K562 (cell line): ENCODE measurements at regions of chr22 and their contacts with region 1.

Region 1: GRCh38 chr22:30386960-30387827 is at the start of gene RNF215:
- DNase-seq: peak; percentile 82 to 93 (median 91)
- ATAC-seq: peak; percentile 88
- H3K4me3 ChIP-seq: peak within 1 kb of the TSS; percentile 48
- H3K27ac ChIP-seq: no peak within 1 kb of the TSS
- H3K4me1 ChIP-seq: peaks cover 12 to 25% of the 10 kb centered on the region in 2 experiments; a peak in 4 of 5 replicates
- H3K27me3 ChIP-seq: no peaks in the 10 kb centered on the region
- CTCF ChIP-seq: peak; percentile 69 to 87 (median 73)
- EP300 ChIP-seq: no peak
- POLR2A ChIP-seq: no peak
- RAD21 ChIP-seq: peak; percentile 66 to 75
- polyA plus RNA-seq, gene RNF215: 0.08 to 0.10 TPM

Region 2: GRCh38 chr22:30104501-30105156 is 282.6 kb before region 1 on chr22:
- CTCF ChIA-PET with region 1: no interaction called
- POLR2A ChIA-PET with region 1: no interaction called
- in situ Hi-C with region 1: loop called (anchors 25 kb)
- intact Hi-C with region 1: loop called (anchors 5 kb)
- DNase-seq: no peak
- ATAC-seq: no peak
- H3K4me3 ChIP-seq: no peak overlapping the region
- H3K27ac ChIP-seq: no peak overlapping the region
- H3K4me1 ChIP-seq: no peaks in the 10 kb centered on the region
- H3K27me3 ChIP-seq: no peaks in the 10 kb centered on the region
- CTCF ChIP-seq: no peak
- EP300 ChIP-seq: no peak
- POLR2A ChIP-seq: no peak
- RAD21 ChIP-seq: no peak

Region 3: DNA sequence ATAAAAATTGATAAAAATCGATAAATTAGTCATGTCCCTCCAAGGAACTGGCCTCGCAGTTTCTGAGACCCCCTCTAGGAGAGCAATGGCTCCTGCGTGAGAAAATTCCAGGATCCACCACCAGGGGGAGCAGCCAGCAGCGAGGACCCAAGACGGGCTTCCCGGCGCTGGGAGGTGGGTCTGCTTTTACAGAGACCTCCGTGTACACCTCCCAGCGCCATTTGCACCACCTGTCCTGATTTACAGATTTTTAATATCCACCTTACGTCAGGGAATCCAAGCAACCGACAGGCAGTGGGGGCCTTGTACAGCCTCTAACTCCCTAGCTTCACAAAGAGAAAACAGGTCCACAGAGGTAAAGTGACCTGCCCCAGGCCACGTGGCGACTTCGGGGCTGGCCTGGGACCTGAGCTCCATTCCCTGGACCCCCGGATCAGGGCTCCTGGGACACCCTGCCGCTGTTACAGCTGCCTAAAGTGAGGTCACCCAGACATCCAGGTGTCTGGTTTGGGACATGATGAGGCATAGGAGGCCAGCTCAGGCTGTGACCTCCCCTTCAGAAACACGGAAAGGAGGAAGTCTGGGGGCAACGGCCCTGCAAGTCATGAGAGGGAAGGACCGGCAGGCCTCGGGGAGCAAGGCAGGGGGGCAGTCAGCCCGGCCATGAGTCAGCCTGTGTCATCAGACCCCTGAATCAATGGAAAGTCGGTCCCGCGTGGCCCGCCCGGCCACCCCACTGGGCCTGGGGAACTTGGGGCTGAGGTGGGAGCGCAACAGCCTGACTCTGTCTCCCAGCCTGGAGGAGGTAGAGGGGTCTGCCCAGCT is 124.1 kb before region 1 on chr22:
- CTCF ChIA-PET with region 1: interaction called, 16 read pairs
- POLR2A ChIA-PET with region 1: interaction called, 3 read pairs
- in situ Hi-C with region 1: loop called (anchors 5 kb)
- intact Hi-C with region 1: no loop called
- DNase-seq: peak; percentile 71 to 78 (median 73)
- ATAC-seq: peak; percentile 83
- H3K4me3 ChIP-seq: no peak overlapping the region
- H3K27ac ChIP-seq: no peak overlapping the region; the same call in 2 of the 3 replicates
- H3K4me1 ChIP-seq: peaks cover 2 to 48% of the 10 kb centered on the region in 2 experiments; a peak in 3 of 5 replicates
- H3K27me3 ChIP-seq: no peaks in the 10 kb centered on the region
- CTCF ChIP-seq: peak; percentile 84 to 96 (median 86)
- EP300 ChIP-seq: no peak
- POLR2A ChIP-seq: no peak
- RAD21 ChIP-seq: peak; percentile 49 to 71

Region 4: GRCh38 chr22:30423982-30424963 is 37.1 kb after region 1 on chr22:
- CTCF ChIA-PET with region 1: interaction called, 5 read pairs
- POLR2A ChIA-PET with region 1: no interaction called
- in situ Hi-C with region 1: loop called (anchors 5 kb)
- intact Hi-C with region 1: loop called (anchors 1 kb)
- DNase-seq: peak; percentile 91 to 98 (median 94)
- ATAC-seq: peak; percentile 83
- H3K4me3 ChIP-seq: peak overlapping the region; percentile 59
- H3K27ac ChIP-seq: peak overlapping the region; percentile 94
- H3K4me1 ChIP-seq: peaks cover 46 to 47% of the 10 kb centered on the region in 2 experiments
- H3K27me3 ChIP-seq: no peaks in the 10 kb centered on the region
- CTCF ChIP-seq: 0 out of 6 replicates have a peak, but pooled peaks of 2 of the 3 experiments have one; percentile 3 to 6
- EP300 ChIP-seq: no peak
- POLR2A ChIP-seq: peak; percentile 29; the same call in 1 of the 2 replicates
- RAD21 ChIP-seq: no peak

Region 5: GRCh38 chr22:30485362-30485988 is 98.3 kb after region 1 on chr22:
- CTCF ChIA-PET with region 1: interaction called, 24 read pairs
- POLR2A ChIA-PET with region 1: no interaction called
- in situ Hi-C with region 1: loop called (anchors 5 kb)
- intact Hi-C with region 1: loop called (anchors 1 kb)
- DNase-seq: peak; percentile 77 to 92 (median 90)
- ATAC-seq: peak; percentile 99
- H3K4me3 ChIP-seq: no peak overlapping the region
- H3K27ac ChIP-seq: no peak overlapping the region
- H3K4me1 ChIP-seq: peaks cover under 1 to 8% of the 10 kb centered on the region in 2 experiments; a peak in 4 of 5 replicates
- H3K27me3 ChIP-seq: 0 out of 5 replicates have a peak, but pooled peaks cover 0 to 11% of the 10 kb centered on the region in 2 experiments
- CTCF ChIP-seq: peak; percentile 84 to 91 (median 87)
- EP300 ChIP-seq: no peak
- POLR2A ChIP-seq: no peak
- RAD21 ChIP-seq: peak; percentile 76 to 90